Natural killer cell (primary cell): ENCODE measurements at regions of chr1 and their contacts with region 1.

Region 1: GRCh38 chr1:175237389-175237788 is 44.8 kb upstream of the KIAA0040 start:
- DNase-seq: no peak
- ATAC-seq: no peak
- H3K4me3 ChIP-seq: no peak overlapping the region
- H3K4me3 Mint-ChIP-seq: no peak overlapping the region
- H3K27ac ChIP-seq: no peak overlapping the region
- H3K27ac Mint-ChIP-seq: no peak overlapping the region
- H3K4me1 ChIP-seq: peaks cover 4% of the 10 kb centered on the region
- H3K4me1 Mint-ChIP-seq: peaks cover 0 to 5% of the 10 kb centered on the region in 2 donors
- H3K27me3 ChIP-seq: no peaks in the 10 kb centered on the region
- H3K27me3 Mint-ChIP-seq: peaks cover 0 to 7% of the 10 kb centered on the region in 2 donors
- CTCF ChIP-seq: no peak

Region 2: GRCh38 chr1:175273376-175274031 is 36.1 kb after region 1 on chr1:
- intact Hi-C with region 1: loop called (anchors 2 kb)
- DNase-seq: no peak
- ATAC-seq: no peak
- H3K4me3 ChIP-seq: no peak overlapping the region
- H3K4me3 Mint-ChIP-seq: no peak overlapping the region
- H3K27ac ChIP-seq: no peak overlapping the region
- H3K27ac Mint-ChIP-seq: no peak overlapping the region
- H3K4me1 ChIP-seq: no peaks in the 10 kb centered on the region
- H3K4me1 Mint-ChIP-seq: no peaks in the 10 kb centered on the region
- H3K27me3 ChIP-seq: no peaks in the 10 kb centered on the region
- H3K27me3 Mint-ChIP-seq: peaks cover 4 to 23% of the 10 kb centered on the region in 2 donors
- CTCF ChIP-seq: no peak

Region 3: DNA sequence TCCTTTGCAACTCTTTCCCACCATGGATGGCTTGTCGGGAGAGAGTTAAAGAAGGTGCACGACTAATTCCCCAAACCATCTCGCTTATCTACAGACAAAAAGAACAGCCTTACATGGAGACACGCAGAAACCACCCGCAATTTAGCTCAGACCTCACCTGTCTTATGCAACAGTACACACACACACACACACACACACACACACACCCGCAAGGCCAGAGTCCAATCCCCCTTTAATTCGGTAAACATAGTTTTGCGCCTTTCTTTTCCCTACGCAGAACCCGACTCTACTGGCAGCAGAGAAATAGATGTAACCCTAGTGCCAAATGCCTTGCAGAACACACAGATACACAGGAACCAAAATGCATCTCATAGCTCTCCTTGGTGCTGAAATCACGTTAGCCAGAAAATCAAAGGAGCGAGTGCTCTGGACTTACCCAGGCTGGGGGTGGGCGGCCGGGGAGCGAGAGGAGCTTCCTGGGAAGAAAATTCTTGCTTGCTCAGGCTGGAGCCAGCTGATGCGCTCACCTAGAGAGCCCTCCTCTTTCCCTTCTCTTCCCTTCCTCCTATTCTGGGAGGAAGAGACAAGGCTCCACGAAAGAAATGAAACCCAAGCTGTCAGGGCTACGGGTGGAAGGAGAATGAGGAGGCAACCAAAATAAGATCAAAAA is 505.5 kb after region 1 on chr1:
- intact Hi-C with region 1: no loop called
- DNase-seq: no peak
- ATAC-seq: peak in 1 of 3 donors; percentile 45
- H3K4me3 ChIP-seq: no peak overlapping the region
- H3K4me3 Mint-ChIP-seq: no peak overlapping the region
- H3K27ac ChIP-seq: no peak overlapping the region
- H3K27ac Mint-ChIP-seq: no peak overlapping the region
- H3K4me1 ChIP-seq: peaks cover 5% of the 10 kb centered on the region
- H3K4me1 Mint-ChIP-seq: peaks cover 5% of the 10 kb centered on the region in 2 donors
- H3K27me3 ChIP-seq: peaks cover 2% of the 10 kb centered on the region
- H3K27me3 Mint-ChIP-seq: peaks cover 17 to 65% of the 10 kb centered on the region in 2 donors
- CTCF ChIP-seq: no peak